Activated naive CD4-positive, alpha-beta T cell treated with anti-CD3 and anti-CD28 coated beads for 36 hours (primary cell): ENCODE measurements at regions of chr2 and their contacts with region 1.

Region 1: GRCh38 chr2:96773922-96774321 is 13.2 kb downstream of the CNNM4 start:
- DNase-seq: peak; percentile 70
- H3K4me3 Mint-ChIP-seq: peak overlapping the region; percentile 57
- H3K27ac Mint-ChIP-seq: peak overlapping the region; percentile 61
- H3K4me1 Mint-ChIP-seq: peaks cover 21% of the 10 kb centered on the region
- H3K27me3 Mint-ChIP-seq: no peaks in the 10 kb centered on the region

Region 2: DNA sequence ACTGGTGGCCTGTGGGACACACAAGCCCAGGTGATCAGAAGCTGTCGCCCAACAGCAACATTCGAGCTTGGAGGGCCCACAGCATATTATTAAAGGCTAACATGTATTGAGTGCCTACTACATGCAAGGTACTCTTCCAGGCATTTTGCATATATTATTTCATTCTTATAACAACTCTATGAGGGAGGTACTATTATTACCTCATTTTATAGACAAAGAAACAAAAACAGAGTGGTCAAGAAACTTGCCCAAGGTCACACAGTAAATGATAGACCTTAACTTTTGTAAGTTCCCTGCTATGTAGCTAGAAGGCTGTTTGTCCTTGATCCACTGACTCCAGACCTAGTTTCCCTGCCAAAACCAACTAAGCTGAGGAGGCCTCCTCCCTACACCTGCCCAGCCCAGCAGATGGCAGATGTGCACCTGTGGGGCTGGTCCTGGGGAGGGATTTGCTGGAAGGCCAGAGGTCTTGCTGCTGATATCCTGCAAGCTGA is 171.5 kb before region 1 on chr2:
- CTCF ChIA-PET with region 1: no interaction called
- intact Hi-C with region 1: no loop called
- DNase-seq: peak; percentile 26
- H3K4me3 Mint-ChIP-seq: no peak overlapping the region
- H3K27ac Mint-ChIP-seq: no peak overlapping the region
- H3K4me1 Mint-ChIP-seq: peaks cover 9% of the 10 kb centered on the region
- H3K27me3 Mint-ChIP-seq: no peaks in the 10 kb centered on the region

Region 3: DNA sequence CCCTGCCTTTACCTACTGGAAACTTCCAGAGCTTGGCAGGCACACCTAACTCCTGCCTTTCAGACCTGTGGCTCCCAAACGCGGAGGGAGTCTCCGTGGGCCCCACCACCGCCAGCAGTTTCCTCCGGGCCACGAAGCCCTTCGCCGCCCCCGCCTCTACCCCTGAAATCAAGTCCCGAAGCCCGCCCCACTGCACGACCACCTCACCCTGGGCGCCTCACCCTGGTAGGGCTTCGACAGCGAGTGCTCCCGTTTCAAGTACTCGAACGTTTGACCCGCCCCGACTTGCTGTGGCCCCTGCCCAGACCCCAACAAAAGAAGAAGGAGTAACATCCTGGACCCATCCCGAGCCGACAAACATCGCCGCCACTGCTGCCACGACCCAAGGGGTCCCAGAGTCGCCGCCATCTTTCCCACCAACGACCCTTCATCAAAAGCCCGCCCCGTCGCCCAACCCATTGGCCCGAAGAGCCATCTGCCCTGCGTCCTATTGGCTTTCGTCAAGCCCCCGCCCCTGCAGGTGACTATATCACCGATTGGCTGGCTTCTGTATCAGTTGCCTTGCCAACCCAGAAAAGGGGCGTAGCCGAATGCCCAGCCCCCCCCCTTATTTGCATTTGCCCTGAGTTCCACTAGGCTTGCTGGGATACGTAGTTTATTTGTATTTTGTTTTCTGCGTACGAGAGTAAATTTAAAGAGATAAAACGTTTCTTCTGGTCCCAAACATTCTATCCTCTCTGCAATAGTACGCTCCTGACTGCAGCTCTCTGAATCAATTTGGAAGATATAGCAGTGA is 34.1 kb before region 1 on chr2 and contains the start of gene LMAN2L:
- CTCF ChIA-PET with region 1: no interaction called
- intact Hi-C with region 1: loop called (anchors 1 kb)
- DNase-seq: peak; percentile 99
- H3K4me3 Mint-ChIP-seq: peak within 1 kb of the TSS; percentile 97
- H3K27ac Mint-ChIP-seq: peak within 1 kb of the TSS; percentile 77
- H3K4me1 Mint-ChIP-seq: peaks cover 33% of the 10 kb centered on the region
- H3K27me3 Mint-ChIP-seq: no peaks in the 10 kb centered on the region
- total RNA-seq, gene LMAN2L: 4.0 to 4.8 TPM

Region 4: DNA sequence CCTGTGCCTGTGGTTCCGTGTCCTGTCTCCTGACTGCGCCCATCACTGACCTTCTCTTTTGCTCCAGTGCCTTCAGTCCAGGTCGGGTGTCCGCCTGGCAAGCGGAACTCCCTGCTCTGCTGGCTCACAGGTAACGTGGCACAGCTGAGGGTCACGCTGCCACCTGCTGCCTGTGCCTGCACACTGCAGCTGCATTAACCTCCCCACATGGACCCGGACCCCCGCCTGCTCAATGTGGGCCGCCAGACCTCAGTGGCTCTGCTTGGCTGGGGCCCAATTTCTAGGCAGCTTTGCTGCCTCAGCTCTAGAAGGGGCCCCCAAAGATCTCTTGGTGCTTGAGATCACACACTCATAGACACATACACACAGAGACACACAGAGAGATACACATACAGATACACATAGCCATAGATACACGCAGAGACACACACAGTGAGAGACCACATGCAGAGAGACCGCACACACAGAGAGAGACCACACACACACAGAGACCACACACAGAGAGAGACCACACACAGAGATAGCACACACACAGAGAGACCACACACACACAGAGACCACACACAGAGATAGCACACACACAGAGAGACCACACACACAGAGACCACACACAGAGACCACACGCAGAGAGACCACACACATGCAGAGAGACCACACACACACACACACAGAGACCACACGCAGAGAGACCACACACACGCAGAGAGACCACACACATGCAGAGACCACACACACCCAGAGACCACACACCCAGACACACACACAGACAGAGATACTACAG is 27.3 kb after region 1 on chr2:
- CTCF ChIA-PET with region 1: interaction called, 11 read pairs
- intact Hi-C with region 1: no loop called
- DNase-seq: peak; percentile 83
- H3K4me3 Mint-ChIP-seq: no peak overlapping the region
- H3K27ac Mint-ChIP-seq: no peak overlapping the region
- H3K4me1 Mint-ChIP-seq: peaks cover 2% of the 10 kb centered on the region
- H3K27me3 Mint-ChIP-seq: no peaks in the 10 kb centered on the region